Activated CD8-positive, alpha-beta memory T cell treated with anti-CD3 and anti-CD28 coated beads, Interleukin-2, amount 10 ng/mL, durations not matched to agents 7 days and 5 days (primary cell): ENCODE measurements at regions of chr1 and their contacts with region 1.

Region 1: GRCh38 chr1:212455803-212456528 is 23.2 kb downstream of the NENF start:
- DNase-seq: peak; percentile 87
- ATAC-seq: peak; percentile 79
- H3K4me3 Mint-ChIP-seq: no peak overlapping the region
- H3K27ac Mint-ChIP-seq: no peak overlapping the region
- H3K4me1 Mint-ChIP-seq: peaks cover 7% of the 10 kb centered on the region
- H3K27me3 Mint-ChIP-seq: no peaks in the 10 kb centered on the region

Region 2: DNA sequence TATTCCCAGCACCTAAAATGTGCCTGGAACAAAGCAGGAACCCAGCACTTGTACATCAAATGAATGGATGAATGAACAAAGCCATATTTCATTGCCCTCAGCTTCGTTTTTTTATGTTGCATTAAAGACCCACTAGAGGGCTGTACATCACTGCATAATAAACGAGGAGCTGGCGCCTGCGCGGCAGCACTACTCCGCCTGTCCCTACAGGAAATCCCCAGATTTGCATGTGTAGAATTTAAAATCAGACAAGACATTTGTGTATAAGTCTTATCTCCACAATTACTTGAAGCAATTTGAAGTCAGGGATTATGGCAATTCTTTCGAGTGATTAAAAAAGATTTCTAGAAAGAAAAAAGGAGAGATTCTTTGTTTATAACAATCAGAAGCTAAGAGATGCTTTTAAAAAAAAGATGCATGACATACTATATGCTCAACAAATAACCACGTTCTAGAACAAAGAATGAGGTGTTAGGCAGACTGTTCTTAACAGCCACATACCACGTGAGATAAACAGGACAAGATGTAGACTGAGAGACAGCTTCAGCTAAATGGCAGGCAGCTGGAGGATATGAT is 775.1 kb before region 1 on chr1:
- CTCF ChIA-PET with region 1: interaction called, 61 read pairs
- DNase-seq: peak; percentile 83
- ATAC-seq: peak; percentile 95
- H3K4me3 Mint-ChIP-seq: no peak overlapping the region
- H3K27ac Mint-ChIP-seq: peak overlapping the region; percentile 67
- H3K4me1 Mint-ChIP-seq: peaks cover 9% of the 10 kb centered on the region
- H3K27me3 Mint-ChIP-seq: peaks cover 3% of the 10 kb centered on the region

Region 3: DNA sequence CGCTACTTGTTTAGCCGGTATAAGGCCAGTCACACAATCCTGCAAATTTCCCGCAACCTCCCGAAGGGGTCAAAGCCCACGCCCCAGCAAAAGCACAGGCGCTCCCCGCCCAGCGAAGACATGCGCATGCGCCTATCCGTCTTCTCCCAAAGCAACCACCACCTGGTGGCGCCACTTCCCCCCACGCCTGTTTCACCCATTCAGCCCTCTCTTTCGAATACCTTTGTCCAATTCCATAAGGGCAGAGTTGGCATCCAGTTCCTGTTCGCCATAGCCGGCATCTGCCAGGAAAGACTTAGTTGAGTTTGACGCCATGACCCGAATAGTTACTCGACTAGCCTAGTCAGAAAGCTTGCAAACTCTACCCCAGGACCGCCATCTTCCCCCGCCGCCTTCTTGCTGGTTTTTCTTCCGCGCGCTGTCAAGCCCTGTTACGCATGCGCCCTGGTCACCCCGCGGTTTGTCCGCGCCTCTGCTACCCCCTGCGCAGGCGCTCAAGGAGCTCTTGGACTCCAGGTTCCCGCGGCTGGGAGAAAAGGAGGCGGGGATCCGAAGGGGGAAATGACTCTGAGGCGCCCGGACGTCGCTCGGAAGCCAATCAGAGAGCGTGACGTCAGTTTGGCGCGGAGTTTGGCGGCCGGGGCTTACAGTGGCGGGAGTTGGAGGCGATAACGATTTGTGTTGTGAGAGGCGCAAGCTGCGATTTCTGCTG is 420.7 kb before region 1 on chr1 and contains the starts of genes DTL and INTS7:
- CTCF ChIA-PET with region 1: interaction called, 22 read pairs
- DNase-seq: peak; percentile 100
- ATAC-seq: peak; percentile 90
- H3K4me3 Mint-ChIP-seq: peak within 1 kb of the TSS; percentile 93
- H3K27ac Mint-ChIP-seq: peak within 1 kb of the TSS; percentile 96
- H3K4me1 Mint-ChIP-seq: peaks cover 60% of the 10 kb centered on the region
- H3K27me3 Mint-ChIP-seq: no peaks in the 10 kb centered on the region
- total RNA-seq, gene DTL: 86.2 to 97.2 TPM
- total RNA-seq, gene INTS7: 31.7 to 32.8 TPM

Region 4: GRCh38 chr1:212353181-212353580 is 102.8 kb before region 1 on chr1:
- CTCF ChIA-PET with region 1: interaction called, 12 read pairs
- DNase-seq: no peak
- ATAC-seq: no peak
- H3K4me3 Mint-ChIP-seq: no peak overlapping the region
- H3K27ac Mint-ChIP-seq: no peak overlapping the region
- H3K4me1 Mint-ChIP-seq: peaks cover 3% of the 10 kb centered on the region
- H3K27me3 Mint-ChIP-seq: no peaks in the 10 kb centered on the region

Region 5: DNA sequence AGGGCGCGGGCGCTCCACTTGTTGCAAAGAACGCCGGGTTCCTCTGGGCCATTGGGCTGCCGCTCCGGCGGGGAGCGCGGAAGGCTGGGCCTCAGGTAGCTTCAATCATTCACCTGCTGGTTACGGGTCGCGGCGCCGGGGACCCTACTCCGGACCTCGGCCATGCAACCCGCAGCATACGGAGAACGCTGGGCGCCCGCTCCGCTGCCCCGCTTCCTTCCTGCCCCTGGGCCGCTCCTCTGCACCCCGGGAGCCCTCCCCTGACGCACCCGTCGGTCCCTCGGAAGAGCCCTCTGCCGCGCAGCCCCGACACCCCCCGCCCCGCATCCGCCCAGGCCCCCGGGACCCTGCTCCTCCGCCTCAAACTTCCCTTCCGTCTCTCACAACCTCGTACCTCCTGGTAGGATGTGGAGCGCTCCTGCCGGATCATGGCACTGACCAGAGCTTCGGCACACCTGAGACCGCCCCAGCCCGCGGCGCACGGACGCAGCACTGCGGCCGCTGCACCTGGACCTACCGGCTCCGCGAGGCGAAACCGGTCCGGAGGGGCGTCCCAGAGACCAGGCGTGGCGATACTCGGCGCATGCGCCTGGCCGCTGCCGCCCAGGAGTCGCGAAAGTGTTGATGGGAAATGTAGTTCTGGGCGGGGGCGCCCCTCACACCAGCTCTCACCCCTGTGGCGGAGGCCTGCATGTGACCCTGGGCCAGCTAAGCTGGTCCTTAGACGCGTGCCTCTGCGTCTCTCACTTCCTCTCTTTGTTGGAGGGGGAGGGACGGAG is 41.4 kb before region 1 on chr1 and contains the start of gene PACC1:
- CTCF ChIA-PET with region 1: interaction called, 13 read pairs
- DNase-seq: peak; percentile 96
- ATAC-seq: peak; percentile 97
- H3K4me3 Mint-ChIP-seq: peak within 1 kb of the TSS; percentile 94
- H3K27ac Mint-ChIP-seq: peak within 1 kb of the TSS; percentile 91
- H3K4me1 Mint-ChIP-seq: peaks cover 35% of the 10 kb centered on the region
- H3K27me3 Mint-ChIP-seq: no peaks in the 10 kb centered on the region
- total RNA-seq, gene PACC1: 13.0 to 17.1 TPM

Region 6: GRCh38 chr1:212469701-212470458 is 13.9 kb after region 1 on chr1:
- CTCF ChIA-PET with region 1: interaction called, 65 read pairs
- DNase-seq: no peak
- ATAC-seq: no peak
- H3K4me3 Mint-ChIP-seq: no peak overlapping the region
- H3K27ac Mint-ChIP-seq: no peak overlapping the region
- H3K4me1 Mint-ChIP-seq: peaks cover 10% of the 10 kb centered on the region
- H3K27me3 Mint-ChIP-seq: no peaks in the 10 kb centered on the region

Region 7: GRCh38 chr1:212782422-212783154 is 326.6 kb after region 1 on chr1:
- CTCF ChIA-PET with region 1: interaction called, 10 read pairs
- DNase-seq: no peak
- ATAC-seq: peak; percentile 60
- H3K4me3 Mint-ChIP-seq: no peak overlapping the region
- H3K27ac Mint-ChIP-seq: no peak overlapping the region
- H3K4me1 Mint-ChIP-seq: peaks cover 36% of the 10 kb centered on the region
- H3K27me3 Mint-ChIP-seq: no peaks in the 10 kb centered on the region